ACHN (cell line): ENCODE measurements at regions of chr1 and their contacts with region 1.

Region 1: DNA sequence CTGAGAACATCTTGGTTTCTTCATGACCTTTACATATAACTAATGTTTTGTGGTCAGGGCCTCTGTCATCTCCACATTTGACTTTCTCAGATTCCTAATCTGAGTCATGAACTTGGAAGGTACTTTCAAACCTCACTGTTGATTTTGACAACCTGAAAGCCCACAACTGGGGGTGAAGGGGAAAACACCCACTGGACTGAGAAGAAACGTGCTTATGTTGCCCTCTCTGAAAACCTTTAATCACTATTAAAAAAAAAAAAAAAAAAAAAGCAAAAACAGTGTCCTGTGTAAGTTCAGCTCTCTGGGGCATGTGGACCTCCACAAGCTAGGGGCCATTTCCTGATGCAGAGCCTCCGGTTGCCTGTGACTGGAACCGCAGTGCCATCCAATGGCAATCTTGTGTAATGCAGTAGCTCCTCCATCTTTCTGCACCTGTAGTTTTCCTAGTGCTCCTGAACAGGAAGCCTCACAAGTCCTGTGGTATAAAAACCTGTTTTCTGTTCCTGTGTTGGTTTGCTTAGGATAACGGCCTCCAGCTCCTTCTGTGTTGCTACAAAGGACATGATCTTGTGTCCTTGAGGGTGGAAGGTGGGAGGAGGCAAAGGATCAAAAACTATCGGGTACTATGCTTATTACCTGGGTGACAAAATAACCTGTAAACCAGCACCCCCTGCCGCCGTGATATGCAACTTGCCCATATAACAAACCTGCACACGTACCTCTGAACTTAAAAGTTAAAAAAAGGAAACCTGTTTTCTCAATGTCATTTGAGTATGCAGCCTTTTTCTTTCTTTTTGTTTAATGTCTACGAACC is 124.5 kb downstream of the ZNF648 start:
- DNase-seq: peak; percentile 74

Region 2: DNA sequence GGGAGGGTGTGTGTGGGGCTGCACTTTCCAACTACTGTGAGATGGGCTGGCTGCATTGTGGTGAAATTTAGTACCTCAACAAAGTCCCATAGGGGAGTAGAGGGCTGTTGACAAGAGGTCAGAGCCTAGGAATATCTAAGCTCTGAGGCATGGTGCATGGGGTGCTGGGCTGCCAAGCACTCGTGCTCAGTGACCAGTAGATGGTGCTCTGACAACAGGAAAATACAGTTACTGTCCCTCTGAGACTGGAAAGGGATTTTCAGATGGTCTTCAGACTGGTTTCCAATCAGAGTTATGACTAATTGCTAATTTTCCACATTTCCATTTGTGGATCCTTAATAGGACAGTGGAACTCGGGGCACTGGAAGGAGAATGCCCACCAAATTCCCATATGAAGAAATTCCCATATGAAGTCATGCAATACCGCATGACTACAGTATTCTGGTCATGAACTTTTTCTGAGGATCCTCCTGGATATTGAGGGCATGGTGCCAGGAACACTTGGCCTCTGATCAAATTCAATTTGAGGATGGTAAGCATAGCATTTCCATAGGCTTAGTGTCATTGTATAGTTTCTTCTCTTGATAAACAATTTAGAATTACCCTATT is 457.7 kb before region 1 on chr1:
- in situ Hi-C with region 1: loop called (anchors 25 kb)
- DNase-seq: peak; percentile 62

Region 3: GRCh38 chr1:181655761-181656160 is 281.2 kb before region 1 on chr1:
- in situ Hi-C with region 1: no loop called
- DNase-seq: peak; percentile 60